HEK293T (cell line): ENCODE measurements at regions of chr12 and their contacts with region 1.

Region 1: DNA sequence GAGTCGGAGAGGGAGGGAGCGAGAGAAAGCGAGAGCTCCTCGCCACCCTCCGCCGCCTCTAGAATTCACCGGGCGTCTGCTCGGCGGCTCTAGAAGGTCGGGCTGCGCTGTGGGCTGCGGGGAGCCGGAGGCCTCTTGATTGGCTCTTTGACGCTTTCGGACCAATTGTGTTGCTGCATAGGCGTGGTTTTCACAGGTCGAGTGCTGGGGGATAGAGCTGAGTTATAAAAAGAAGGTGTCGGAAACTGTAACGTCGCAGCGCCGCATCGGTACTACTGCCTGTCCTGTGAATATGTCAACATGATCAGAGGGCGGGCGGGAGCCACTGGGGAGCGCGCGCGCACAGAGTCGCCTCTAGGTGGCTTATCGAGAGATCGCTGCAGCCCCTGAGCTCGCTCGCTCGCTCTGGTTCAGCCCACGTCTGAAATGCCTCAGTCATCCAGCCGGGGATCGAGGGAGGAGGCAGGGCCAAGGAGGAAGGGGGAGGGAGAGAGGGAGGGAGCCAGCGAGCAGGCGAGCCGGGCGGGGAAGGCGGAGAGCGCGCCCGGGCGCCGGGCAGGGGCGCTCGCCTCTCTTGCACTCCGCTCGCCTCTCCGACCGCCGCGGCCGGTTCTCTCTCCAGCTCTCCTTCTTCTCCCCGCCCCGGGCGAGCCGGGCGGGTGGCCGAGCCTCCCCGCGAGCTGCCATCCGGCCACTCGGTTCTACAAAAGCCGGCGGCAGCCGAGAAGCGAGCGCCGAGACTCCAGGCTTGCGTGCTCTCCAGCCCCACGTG is at the start of gene TBX3:
- DNase-seq: peak; percentile 83

Region 2: DNA sequence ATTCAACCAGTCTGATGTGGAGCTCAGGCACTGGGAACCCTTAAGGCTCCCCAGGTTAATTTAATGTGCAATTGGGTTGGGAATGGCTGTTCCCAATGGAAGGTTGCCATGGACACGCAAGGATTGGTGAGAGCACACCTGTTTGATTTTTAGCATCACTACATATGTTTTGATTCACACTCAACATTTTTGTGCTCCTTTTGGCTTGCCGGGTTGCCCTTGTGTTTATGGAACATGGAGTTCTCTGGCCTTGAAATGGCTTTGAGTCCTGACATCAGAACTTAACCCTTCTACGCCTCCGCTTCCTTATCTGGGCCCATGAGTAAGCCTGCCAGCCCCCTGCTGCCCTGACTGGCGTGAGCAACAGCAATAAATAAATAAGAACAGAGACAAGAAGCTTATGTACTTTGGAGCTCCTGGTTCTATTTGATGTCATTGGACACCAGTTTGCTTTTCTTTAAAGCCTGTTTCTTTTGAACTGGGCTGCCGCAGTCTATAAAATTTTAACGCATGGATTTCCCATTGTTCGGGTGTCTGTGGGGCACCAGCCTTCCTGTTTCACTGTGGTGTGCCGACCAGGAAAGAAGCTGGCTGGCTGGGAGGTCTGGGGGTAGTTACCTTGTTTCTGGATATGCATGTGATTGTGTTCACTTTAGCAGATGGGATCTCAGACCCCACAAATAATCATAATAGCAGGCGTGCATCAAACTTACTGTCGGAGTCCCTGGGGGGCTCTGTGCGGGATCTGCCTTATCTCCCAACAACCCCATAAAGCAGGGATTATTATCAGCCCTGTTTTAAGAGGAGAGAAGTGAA is 28.1 kb before region 1 on chr12:
- CTCF ChIA-PET with region 1: no interaction called
- POLR2A ChIA-PET with region 1: interaction called, 13 read pairs
- DNase-seq: peak; percentile 72

Region 3: GRCh38 chr12:114668151-114668885 is 16.0 kb before region 1 on chr12:
- CTCF ChIA-PET with region 1: interaction called, 10 read pairs
- POLR2A ChIA-PET with region 1: interaction called, 62 read pairs
- DNase-seq: peak; percentile 78

Region 4: GRCh38 chr12:114694436-114695304 is 10.4 kb after region 1 on chr12:
- CTCF ChIA-PET with region 1: no interaction called
- POLR2A ChIA-PET with region 1: interaction called, 21 read pairs
- DNase-seq: no peak

Region 5: GRCh38 chr12:114704096-114704495 is 19.8 kb after region 1 on chr12:
- CTCF ChIA-PET with region 1: interaction called, 4 read pairs
- POLR2A ChIA-PET with region 1: interaction called, 12 read pairs
- DNase-seq: no peak

Region 6: DNA sequence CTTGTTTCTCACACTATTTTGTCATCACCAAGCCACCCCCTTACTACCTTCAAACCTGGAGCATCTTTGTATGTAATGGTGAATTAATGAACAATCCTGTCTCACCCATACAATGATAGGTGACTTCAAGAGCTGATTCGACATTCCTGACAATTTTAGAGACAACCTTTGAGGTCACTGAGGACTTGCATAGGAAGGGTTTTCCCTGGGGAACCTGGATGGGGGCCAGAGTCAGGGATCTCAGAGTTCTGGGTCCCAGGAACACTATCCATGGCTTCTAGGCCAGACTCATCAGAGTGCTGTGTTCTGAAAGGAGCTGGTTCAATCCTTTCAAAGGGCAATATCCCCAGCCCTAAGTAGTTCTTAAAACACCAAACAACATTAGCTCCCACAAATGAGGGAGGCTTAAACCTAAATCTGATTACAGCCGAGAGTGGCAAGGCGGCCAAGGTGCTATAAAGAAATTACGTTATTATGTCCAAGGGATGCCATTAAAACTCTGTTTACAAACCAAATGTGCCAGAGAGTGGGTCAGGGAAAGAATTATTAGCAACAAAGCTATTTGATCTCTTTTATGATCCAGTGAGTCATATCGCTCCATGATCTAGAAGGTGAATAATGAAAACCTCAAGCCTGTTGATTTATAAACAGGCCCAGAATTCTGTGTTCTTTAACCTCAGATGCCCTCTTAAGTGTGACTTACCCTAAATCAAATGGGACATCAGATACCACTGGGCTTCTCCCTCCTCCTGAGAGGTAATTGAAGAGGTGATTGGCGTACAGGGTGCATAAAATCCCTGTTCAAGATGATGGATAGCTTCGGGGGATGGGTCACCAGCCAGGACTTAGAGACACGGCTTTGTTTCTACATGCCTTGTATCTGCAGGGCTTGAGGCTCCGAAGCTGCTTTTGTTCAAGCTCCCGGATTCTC is 229.9 kb after region 1 on chr12:
- CTCF ChIA-PET with region 1: interaction called, 4 read pairs
- POLR2A ChIA-PET with region 1: interaction called, 13 read pairs
- DNase-seq: peak; percentile 76

Region 7: GRCh38 chr12:115833704-115834103 is 1149.4 kb after region 1 on chr12:
- CTCF ChIA-PET with region 1: interaction called, 11 read pairs
- POLR2A ChIA-PET with region 1: no interaction called
- DNase-seq: no peak